ENCODE measurements at regions of chr12 and their contacts with region 1.

Region 1: DNA sequence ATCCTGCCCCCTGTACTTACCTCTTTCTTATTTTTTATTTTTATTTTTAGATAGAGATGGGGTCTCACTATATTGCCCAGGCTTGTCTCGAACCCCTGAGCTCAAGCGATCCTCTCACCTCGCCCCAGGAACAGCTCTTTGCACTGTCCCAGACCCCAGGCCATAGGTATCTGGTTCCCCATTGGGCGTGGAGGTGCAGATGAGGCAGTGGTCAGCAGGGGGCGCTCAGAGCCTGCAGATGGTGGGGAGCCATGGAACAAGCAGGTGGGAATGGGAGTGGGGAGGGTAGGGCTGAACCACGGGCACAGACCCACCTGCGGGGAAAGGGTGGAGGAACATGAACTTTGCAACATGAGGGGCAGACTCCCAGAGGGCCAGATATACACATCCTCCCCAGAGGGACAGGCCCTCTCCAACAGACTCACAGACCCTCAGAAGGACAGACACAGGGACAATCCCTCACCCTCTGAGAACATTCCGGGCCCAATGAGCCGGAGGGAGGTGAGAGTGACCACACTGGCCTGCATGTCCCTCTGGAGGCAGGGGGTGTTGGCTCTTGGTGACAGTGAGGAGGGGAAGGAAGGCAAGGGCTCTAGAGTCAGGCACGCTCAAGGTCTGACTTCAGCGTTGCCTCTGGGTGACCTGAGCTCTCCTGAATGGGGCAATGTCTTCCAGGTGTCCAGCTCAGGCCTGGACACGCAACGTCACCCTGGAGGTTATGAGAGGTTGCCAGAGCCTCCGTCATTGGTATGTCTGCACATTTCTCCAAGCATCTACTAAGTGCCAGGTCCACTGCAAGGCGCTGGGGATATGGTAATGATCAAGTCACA is 34.9 kb downstream of the KRT80 start:
- DNase-seq: peak; percentile 65 to 86 (median 75)
- ATAC-seq: peak; percentile 49 to 77 (median 72)
- H3K4me3 ChIP-seq: no peak overlapping the region
- H3K27ac ChIP-seq: no peak overlapping the region
- H3K4me1 ChIP-seq: peaks cover under 1 to 23% (median 6%) of the 10 kb centered on the region in 12 donors
- H3K27me3 ChIP-seq: no peaks in the 10 kb centered on the region
- CTCF ChIP-seq: peak; percentile 84 to 95 (median 92)
- POLR2A ChIP-seq: no peak

Region 2: DNA sequence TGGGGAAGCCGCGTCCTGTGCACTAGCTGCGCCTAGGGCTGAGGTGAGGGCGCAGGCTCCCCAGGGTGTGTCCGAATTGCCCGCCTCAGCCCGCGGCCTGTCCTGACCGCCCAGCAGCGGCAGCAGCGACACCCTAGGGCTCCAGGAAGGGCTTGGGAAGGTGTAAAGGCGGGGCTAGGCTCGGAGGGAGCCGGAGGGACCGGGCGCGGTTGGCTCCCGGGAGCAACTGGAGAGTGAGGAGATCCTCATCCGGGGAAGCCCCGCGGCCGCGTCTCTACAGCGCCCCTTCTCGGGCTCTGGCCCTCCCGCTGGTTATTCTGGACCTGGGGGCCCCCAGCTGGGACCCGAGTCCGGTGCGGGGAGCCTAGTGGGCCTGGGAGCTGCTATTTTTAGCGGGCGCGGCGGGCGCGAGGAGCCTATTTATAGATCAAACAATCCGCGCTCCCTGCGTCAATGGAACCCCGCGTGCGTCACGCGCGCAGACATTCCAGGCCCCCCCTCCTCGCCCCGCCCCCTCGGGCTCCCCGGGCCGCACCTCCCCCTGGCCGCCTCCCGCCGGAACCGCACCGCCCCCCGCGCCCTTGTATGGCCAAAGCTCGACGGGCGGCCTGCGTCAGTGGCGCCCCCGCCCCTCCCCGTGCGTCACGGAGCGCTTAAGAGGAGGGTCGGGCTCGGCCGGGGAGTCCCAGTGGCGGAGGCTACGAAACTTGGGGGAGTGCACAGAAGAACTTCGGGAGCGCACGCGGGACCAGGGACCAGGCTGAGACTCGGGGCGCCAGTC is 106.0 kb before region 1 on chr12 and contains the start of gene NR4A1:
- intact Hi-C with region 1: no loop called
- DNase-seq: peak; percentile 99 to 100 (median 99)
- ATAC-seq: peak; percentile 82 to 89 (median 84)
- H3K4me3 ChIP-seq: peak within 1 kb of the TSS; percentile 48 to 83 (median 74)
- H3K27ac ChIP-seq: peak within 1 kb of the TSS; percentile 89 to 99 (median 97)
- H3K4me1 ChIP-seq: peaks cover 5 to 92% (median 44%) of the 10 kb centered on the region in 12 donors
- H3K27me3 ChIP-seq: no peaks in the 10 kb centered on the region
- CTCF ChIP-seq: peak in 9 of 12 donors; percentile 11 to 64 (median 35)
- POLR2A ChIP-seq: peak; percentile 97
- total RNA-seq, gene NR4A1: 22.0 to 140 (median 42.0) TPM

Region 3: GRCh38 chr12:52087961-52088820 is 68.8 kb before region 1 on chr12:
- intact Hi-C with region 1: no loop called
- DNase-seq: no peak
- ATAC-seq: no peak
- H3K4me3 ChIP-seq: no peak overlapping the region
- H3K27ac ChIP-seq: no peak overlapping the region
- H3K4me1 ChIP-seq: peaks cover 0 to 4% (median 2%) of the 10 kb centered on the region in 12 donors
- H3K27me3 ChIP-seq: peaks cover 0 to 22% (median 6%) of the 10 kb centered on the region in 9 donors
- CTCF ChIP-seq: no peak
- POLR2A ChIP-seq: no peak

Region 4: GRCh38 chr12:52213512-52214420 is 56.8 kb after region 1 on chr12:
- intact Hi-C with region 1: loop called in 3 of 10 experiments (anchors 2 kb)
- DNase-seq: peak; percentile 72 to 90 (median 80)
- ATAC-seq: peak; percentile 80 to 94 (median 91)
- H3K4me3 ChIP-seq: no peak overlapping the region
- H3K27ac ChIP-seq: no peak overlapping the region
- H3K4me1 ChIP-seq: peaks cover 0 to 28% (median 2%) of the 10 kb centered on the region in 12 donors
- H3K27me3 ChIP-seq: peaks cover 0 to 1% (median 0%) of the 10 kb centered on the region in 9 donors
- CTCF ChIP-seq: peak; percentile 88 to 99 (median 95)
- POLR2A ChIP-seq: peak in 1 of 2 donors; percentile 17

Region 5: GRCh38 chr12:52258335-52258901 is 101.5 kb after region 1 on chr12:
- intact Hi-C with region 1: no loop called
- DNase-seq: no peak
- ATAC-seq: peak in 2 of 4 donors; percentile 18 to 50
- H3K4me3 ChIP-seq: peak overlapping the region in 6 of 12 donors; percentile 7 to 28 (median 19)
- H3K27ac ChIP-seq: no peak overlapping the region
- H3K4me1 ChIP-seq: peaks cover 0 to 13% (median 1%) of the 10 kb centered on the region in 12 donors
- H3K27me3 ChIP-seq: peaks cover 12 to 80% (median 39%) of the 10 kb centered on the region in 9 donors
- CTCF ChIP-seq: peak in 1 of 12 donors; percentile 21
- POLR2A ChIP-seq: no peak

Region 6: GRCh38 chr12:52327052-52327829 is 170.3 kb after region 1 on chr12:
- intact Hi-C with region 1: loop called in 9 of 10 experiments (anchors 1 to 5 kb)
- DNase-seq: peak in 4 of 5 donors; percentile 57 to 75 (median 68)
- ATAC-seq: peak; percentile 57 to 93 (median 85)
- H3K4me3 ChIP-seq: no peak overlapping the region
- H3K27ac ChIP-seq: no peak overlapping the region
- H3K4me1 ChIP-seq: no peaks in the 10 kb centered on the region
- H3K27me3 ChIP-seq: peaks cover 0 to 19% (median 0%) of the 10 kb centered on the region in 9 donors
- CTCF ChIP-seq: peak; percentile 50 to 83 (median 68)
- POLR2A ChIP-seq: no peak

Region 7: GRCh38 chr12:52506858-52507715 is 350.1 kb after region 1 on chr12:
- intact Hi-C with region 1: loop called in 9 of 10 experiments (anchors 5 to 10 kb)
- DNase-seq: no peak
- ATAC-seq: peak in 3 of 4 donors; percentile 39 to 69 (median 51)
- H3K4me3 ChIP-seq: no peak overlapping the region
- H3K27ac ChIP-seq: no peak overlapping the region
- H3K4me1 ChIP-seq: peaks cover 0 to 3% (median 0%) of the 10 kb centered on the region in 12 donors
- H3K27me3 ChIP-seq: peaks cover 0 to 29% (median 0%) of the 10 kb centered on the region in 9 donors
- CTCF ChIP-seq: peak; percentile 31 to 63 (median 49)
- POLR2A ChIP-seq: no peak

Region 8: DNA sequence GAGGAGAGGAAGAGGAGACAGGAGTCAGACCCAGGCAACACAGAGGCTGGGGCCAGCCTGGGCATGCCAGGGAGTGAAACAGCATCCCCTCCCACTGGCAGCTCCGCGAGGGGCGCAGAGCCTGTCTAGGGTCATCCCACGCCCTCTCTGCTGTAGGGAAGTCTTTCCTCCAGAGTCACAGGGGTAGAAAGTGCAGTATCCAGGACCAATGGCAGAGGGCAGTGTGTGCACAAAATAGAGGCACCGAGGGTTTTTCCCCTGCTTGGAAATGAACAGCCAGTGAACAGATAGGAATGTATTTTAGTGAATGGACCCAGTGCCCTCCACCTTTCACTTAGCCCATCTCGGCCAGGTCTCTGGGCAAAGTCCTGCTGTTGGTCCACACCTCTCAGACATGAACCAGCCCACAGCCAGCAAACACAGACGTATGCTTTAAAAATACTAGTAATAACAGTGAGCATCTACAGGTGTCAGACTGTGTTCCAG is 426.1 kb after region 1 on chr12:
- intact Hi-C with region 1: loop called in 3 of 10 experiments (anchors 10 kb)
- DNase-seq: peak in 3 of 5 donors; percentile 31 to 52 (median 41)
- ATAC-seq: peak; percentile 56 to 84 (median 74)
- H3K4me3 ChIP-seq: no peak overlapping the region
- H3K27ac ChIP-seq: no peak overlapping the region
- H3K4me1 ChIP-seq: no peaks in the 10 kb centered on the region
- H3K27me3 ChIP-seq: peaks cover 0 to 13% (median 0%) of the 10 kb centered on the region in 9 donors
- CTCF ChIP-seq: peak; percentile 45 to 72 (median 62)
- POLR2A ChIP-seq: no peak

Region 9: DNA sequence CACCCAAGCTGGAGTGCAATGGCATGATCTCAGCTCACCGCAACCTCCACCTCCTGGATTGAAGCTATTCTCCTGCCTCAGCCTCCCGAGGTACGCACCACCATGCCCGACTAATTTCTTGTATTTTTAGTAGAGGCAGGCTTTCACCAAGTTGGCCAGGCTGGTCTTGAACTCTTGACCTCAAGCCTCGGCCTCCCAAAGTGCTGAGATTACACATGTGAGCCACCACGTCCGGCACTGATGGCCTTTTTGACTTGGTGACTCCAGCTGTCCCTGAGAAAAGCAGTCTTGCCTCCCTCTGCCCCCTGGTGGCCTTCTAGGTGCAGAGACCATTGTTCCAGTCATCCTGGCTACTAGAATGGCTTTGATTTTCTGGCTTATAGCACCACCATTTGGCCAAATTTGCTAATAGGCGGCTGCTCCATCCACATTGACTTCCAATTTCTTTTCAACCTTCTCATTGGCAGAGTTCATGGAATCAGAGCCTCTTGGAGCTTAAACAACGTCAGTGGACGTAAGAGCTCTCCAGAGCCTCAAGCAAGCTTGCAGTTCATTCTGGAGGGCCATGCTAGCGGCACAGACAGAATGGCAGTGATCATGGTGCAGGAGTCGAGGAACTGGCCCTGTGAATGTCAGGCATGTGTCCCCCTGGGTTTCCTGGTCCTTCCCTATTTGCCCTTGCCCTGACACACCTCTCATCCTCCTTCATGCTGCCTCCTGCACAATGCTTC is 823.9 kb after region 1 on chr12:
- intact Hi-C with region 1: loop called in 8 of 10 experiments (anchors 5 to 10 kb)
- DNase-seq: peak; percentile 85 to 92 (median 88)
- ATAC-seq: peak; percentile 71 to 96 (median 95)
- H3K4me3 ChIP-seq: no peak overlapping the region
- H3K27ac ChIP-seq: no peak overlapping the region
- H3K4me1 ChIP-seq: peaks cover 0 to 3% (median 0%) of the 10 kb centered on the region in 12 donors
- H3K27me3 ChIP-seq: peaks cover 0 to 20% (median 0%) of the 10 kb centered on the region in 9 donors
- CTCF ChIP-seq: peak; percentile 88 to 99 (median 96)
- POLR2A ChIP-seq: no peak